A673 (cell line): ENCODE measurements at regions of chr3 and their contacts with region 1.

Region 1: GRCh38 chr3:172341482-172342059 is 106.7 kb downstream of the GHSR start:
- DNase-seq: peak; percentile 75
- H3K4me3 ChIP-seq: no peak overlapping the region
- H3K27ac ChIP-seq: no peak overlapping the region
- H3K4me1 ChIP-seq: no peaks in the 10 kb centered on the region
- H3K27me3 ChIP-seq: no peaks in the 10 kb centered on the region
- CTCF ChIP-seq: peak; percentile 65

Region 2: DNA sequence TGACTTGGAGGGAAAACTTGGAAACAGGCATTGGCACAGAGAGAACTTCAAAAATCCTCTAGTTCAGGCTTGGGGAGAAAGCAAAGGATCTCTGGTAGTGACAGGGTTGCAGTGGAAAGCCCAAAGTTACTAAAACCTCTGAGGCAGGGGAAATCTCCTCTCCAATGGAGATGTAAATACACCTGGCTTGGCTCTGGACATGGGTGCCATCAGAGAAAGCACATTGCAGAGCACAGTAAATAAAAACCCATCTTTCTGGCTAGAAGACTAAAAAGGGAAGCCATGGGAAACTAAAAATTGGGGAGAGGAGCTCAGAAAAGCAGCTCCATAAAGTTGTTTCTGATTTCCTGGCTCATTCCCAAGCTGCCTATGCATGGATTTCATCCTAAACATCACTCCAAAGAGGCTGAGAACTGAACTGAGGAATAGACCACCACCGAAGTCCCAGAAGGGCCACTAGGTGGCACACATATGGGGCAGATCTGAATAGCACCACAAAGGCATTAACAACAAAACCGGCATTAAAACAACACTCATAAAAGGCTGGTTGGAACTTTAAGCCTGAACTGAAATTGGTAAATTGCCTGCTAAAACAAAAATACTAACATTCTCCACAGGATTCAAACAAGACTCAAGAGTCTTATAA is 637.7 kb before region 1 on chr3:
- CTCF ChIA-PET with region 1: interaction called, 4 read pairs
- POLR2A ChIA-PET with region 1: no interaction called
- intact Hi-C with region 1: loop called (anchors 5 kb)
- DNase-seq: peak; percentile 77
- H3K4me3 ChIP-seq: no peak overlapping the region
- H3K27ac ChIP-seq: no peak overlapping the region
- H3K4me1 ChIP-seq: no peaks in the 10 kb centered on the region
- H3K27me3 ChIP-seq: no peaks in the 10 kb centered on the region
- CTCF ChIP-seq: peak; percentile 82

Region 3: GRCh38 chr3:172305552-172305951 is 36.0 kb before region 1 on chr3:
- CTCF ChIA-PET with region 1: no interaction called
- POLR2A ChIA-PET with region 1: no interaction called
- intact Hi-C with region 1: no loop called
- DNase-seq: no peak
- H3K4me3 ChIP-seq: no peak overlapping the region
- H3K27ac ChIP-seq: no peak overlapping the region
- H3K4me1 ChIP-seq: peaks cover 1% of the 10 kb centered on the region
- H3K27me3 ChIP-seq: no peaks in the 10 kb centered on the region
- CTCF ChIP-seq: no peak

Region 4: GRCh38 chr3:173089283-173089682 is 747.7 kb after region 1 on chr3:
- CTCF ChIA-PET with region 1: no interaction called
- POLR2A ChIA-PET with region 1: no interaction called
- intact Hi-C with region 1: no loop called
- DNase-seq: no peak
- H3K4me3 ChIP-seq: no peak overlapping the region
- H3K27ac ChIP-seq: no peak overlapping the region
- H3K4me1 ChIP-seq: no peaks in the 10 kb centered on the region
- H3K27me3 ChIP-seq: no peaks in the 10 kb centered on the region
- CTCF ChIP-seq: no peak